ENCODE measurements at regions of chr14 and their contacts with region 1.

Region 1: GRCh38 chr14:99628832-99629618 is 15.9 kb upstream of the HHIPL1 start:
- DNase-seq: peak; percentile 82

Region 2: DNA sequence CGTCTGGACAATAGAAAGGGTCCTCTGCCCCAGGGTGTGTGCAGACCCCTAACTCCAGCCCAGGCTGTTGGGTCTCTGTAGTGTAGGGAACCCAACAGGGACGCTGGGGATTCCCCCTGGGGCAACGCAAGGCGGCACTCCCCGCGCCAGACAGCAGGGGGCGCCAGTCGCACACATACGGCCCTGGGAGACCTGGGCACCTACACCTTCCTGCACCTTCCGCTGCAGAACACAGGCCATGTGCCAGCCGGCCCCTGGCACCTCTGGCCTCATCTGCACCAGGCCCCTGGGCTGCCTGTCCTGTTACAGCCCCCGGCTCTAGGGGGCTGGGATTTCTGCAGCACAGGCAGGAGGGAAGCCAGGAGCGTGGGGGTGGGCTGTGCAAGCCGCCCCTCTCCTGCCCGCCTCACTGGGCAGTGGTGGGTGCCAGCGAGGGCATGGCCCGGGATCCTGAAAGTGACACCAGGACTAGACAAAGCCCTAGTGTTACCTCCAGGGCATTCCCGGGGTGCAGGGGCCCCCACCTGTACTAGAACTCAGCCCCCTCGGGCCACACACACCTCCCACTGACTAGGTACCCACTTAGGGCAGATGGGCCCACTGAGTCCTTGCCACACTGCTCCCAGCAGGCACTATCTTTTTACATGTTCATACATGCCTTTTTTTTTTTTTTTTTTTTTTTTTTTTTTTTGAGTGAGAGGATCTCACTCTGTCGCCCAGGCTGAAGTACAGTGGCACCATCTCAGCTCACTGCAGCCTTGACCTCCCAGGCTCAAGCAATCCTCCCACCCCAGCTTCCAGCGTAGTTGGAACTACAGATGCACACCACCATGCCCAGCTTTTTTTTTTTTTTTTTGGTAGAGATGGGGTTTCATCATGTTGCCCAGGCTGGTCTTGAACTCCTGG is 110.3 kb before region 1 on chr14:
- intact Hi-C with region 1: loop called (anchors 1 kb)
- DNase-seq: peak; percentile 85

Measured in cardiac septum (tissue), 1 donor.